ENCODE measurements at regions of chr4 and their contacts with region 1.

Region 1: GRCh38 chr4:55546756-55547465 is at the start of gene CLOCK:
- DNase-seq: peak; percentile 85 to 91 (median 90)
- H3K4me3 ChIP-seq: peak within 1 kb of the TSS; percentile 85 to 96 (median 92)
- H3K27ac ChIP-seq: peak within 1 kb of the TSS; percentile 77 to 99 (median 97)
- H3K4me1 ChIP-seq: peaks cover 10 to 18% of the 10 kb centered on the region in 2 donors
- H3K27me3 ChIP-seq: no peaks in the 10 kb centered on the region
- CTCF ChIP-seq: peak in 5 of 6 experiments; percentile 26 to 69 (median 59)
- POLR2A ChIP-seq: peak; percentile 61 to 78
- total RNA-seq, gene CLOCK: 17.6 to 37.0 (median 30.6) TPM

Region 2: DNA sequence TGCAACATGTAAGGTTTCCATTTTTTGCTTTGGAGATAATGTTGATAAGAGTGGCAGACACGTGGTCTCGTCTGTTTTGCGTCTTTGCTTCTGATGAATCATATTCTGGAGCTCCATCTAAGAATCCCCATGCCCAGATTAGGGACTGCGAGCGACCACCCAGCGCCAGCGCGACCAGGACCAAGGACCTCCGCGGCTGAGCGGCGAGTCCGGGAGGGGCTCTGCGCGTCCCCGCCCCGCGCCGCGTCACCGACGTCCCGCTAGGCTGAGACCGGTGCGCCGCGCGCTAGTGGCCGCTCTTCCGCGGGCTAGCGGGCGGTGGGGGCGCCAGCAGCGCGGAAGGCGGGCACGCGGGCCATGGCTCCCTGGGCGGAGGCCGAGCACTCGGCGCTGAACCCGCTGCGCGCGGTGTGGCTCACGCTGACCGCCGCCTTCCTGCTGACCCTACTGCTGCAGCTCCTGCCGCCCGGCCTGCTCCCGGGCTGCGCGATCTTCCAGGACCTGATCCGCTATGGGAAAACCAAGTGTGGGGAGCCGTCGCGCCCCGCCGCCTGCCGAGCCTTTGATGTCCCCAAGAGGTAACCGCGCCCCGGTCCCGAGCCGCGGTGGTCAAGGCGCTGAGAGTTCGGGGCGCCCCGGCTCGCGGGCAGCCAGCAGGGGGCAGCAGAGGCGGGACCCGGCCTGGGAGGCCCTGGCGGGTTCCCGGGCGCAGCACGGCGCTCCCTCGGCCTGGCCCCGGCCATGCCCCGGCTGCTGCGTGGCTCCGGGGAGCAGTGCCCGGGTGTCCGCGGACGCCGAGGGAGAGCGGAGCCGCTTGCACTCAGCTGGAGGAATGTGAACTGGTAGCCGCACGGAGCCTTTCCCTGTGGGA is 200.7 kb before region 1 on chr4 and contains the start of gene SRD5A3:
- intact Hi-C with region 1: loop called (anchors 5 to 10 kb)
- DNase-seq: peak; percentile 84 to 91 (median 87)
- H3K4me3 ChIP-seq: peak within 1 kb of the TSS; percentile 17 to 86 (median 61)
- H3K27ac ChIP-seq: peak within 1 kb of the TSS; percentile 87 to 98 (median 97)
- H3K4me1 ChIP-seq: peaks cover 10 to 24% of the 10 kb centered on the region in 2 donors
- H3K27me3 ChIP-seq: no peaks in the 10 kb centered on the region
- CTCF ChIP-seq: peak; percentile 55 to 97 (median 88)
- POLR2A ChIP-seq: peak; percentile 13 to 61
- total RNA-seq, gene SRD5A3: 12.5 to 28.4 (median 17.2) TPM

Region 3: GRCh38 chr4:55356991-55357461 is 189.9 kb before region 1 on chr4:
- intact Hi-C with region 1: no loop called
- DNase-seq: no peak
- H3K4me3 ChIP-seq: no peak overlapping the region
- H3K27ac ChIP-seq: peak overlapping the region in 1 of 5 donors; percentile 8
- H3K4me1 ChIP-seq: peaks cover 22 to 24% of the 10 kb centered on the region in 2 donors
- H3K27me3 ChIP-seq: no peaks in the 10 kb centered on the region
- CTCF ChIP-seq: no peak
- POLR2A ChIP-seq: no peak

Region 4: DNA sequence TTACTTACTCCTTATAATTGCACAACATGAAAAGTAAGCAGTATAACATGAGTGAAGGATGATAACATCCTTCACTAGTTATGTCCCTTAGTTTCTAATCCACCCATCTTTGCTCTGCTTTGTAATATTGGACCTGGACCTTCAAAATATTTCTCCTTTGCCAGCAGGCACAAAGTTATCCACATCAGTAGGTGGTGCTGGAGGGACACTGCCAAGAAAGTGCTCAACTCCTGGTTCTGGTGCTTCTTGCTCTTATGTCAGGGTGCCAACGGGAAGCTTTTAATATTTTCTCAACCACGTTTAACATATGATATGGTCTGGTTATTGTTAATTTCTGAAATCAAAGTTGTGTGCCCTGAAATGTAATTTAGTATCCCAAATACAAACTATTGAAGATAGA is 102.1 kb before region 1 on chr4:
- intact Hi-C with region 1: loop called in 1 of 2 experiments (anchors 5 kb)
- DNase-seq: peak in 4 of 7 donors; percentile 35 to 47 (median 40)
- H3K4me3 ChIP-seq: no peak overlapping the region
- H3K27ac ChIP-seq: no peak overlapping the region
- H3K4me1 ChIP-seq: peaks cover 0 to 6% of the 10 kb centered on the region in 2 donors
- H3K27me3 ChIP-seq: no peaks in the 10 kb centered on the region
- CTCF ChIP-seq: peak in 4 of 6 experiments; percentile 11 to 34 (median 28)
- POLR2A ChIP-seq: no peak

Region 5: GRCh38 chr4:55468724-55469123 is 78.2 kb before region 1 on chr4:
- intact Hi-C with region 1: loop called in 1 of 2 experiments (anchors 10 kb)
- DNase-seq: no peak
- H3K4me3 ChIP-seq: no peak overlapping the region
- H3K27ac ChIP-seq: no peak overlapping the region
- H3K4me1 ChIP-seq: no peaks in the 10 kb centered on the region
- H3K27me3 ChIP-seq: no peaks in the 10 kb centered on the region
- CTCF ChIP-seq: no peak
- POLR2A ChIP-seq: no peak

Region 6: DNA sequence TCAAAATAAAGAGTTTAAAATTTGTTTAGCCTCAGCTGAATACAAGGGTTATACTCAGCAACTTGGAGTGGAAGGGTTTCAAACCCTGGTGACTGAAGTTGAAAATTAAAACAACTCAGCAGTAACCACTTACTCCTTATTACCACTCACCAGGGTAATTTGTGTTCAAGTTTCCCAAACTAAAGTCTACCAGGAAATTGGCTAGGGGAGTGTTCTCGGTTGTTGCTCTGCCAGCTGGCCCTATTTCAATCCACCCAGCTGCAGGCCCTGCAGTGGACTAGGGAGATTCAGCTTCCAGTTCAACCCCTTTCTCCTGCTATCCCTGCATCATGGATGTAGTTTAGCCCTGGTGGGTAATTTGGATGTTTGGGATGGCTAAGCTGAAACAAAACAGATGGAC is 234.9 kb after region 1 on chr4:
- intact Hi-C with region 1: no loop called
- DNase-seq: no peak
- H3K4me3 ChIP-seq: no peak overlapping the region
- H3K27ac ChIP-seq: no peak overlapping the region
- H3K4me1 ChIP-seq: no peaks in the 10 kb centered on the region
- H3K27me3 ChIP-seq: no peaks in the 10 kb centered on the region
- CTCF ChIP-seq: no peak
- POLR2A ChIP-seq: no peak